Activated B cell treated with CpG ODN at 0.5 μM for 24 hours (primary cell): ENCODE measurements at regions of chr16 and their contacts with region 1.

Region 1: DNA sequence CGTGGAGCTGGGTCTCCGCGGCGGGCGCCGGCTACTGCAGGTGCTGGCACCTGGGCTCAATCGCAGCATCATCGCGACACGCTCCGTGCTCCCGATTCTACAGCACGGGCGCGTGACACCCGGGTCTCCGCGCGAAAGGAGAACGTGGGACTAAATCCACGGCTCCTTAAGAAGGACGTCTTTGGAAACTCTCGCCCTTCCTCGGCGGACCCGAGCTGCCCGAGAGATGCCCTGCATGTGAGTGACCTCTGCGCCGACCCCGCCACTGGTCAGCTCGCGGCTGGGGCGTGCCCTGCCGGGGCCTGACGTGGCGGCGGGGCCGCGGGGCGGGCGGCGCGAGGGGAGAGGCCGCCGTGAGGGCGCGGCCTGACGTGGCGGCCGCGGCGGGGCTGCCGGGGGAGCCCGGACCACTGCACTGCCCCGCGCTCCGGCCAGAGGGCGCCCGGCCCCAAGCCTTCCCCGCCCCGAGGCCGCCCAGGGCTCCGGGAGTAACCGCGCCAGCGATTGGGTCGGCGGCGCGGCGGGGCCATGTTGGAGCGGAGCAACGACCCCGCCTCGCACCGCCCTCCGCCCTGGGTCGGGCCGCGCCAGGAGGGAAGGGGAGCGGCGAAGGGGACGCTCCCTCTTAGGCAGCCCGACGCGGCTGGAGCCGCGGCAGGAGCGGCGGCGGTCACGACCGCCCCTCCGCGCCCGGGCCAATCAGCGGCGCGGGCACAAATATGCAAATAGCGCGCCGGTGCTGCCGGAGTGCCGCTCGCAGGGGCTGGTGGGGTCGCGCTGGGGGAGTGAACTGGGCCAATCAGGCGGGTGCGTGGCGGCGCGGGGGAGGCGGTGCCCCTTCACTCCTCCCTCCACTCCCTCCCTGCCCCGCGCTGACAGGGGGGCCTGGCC is 75.6 kb downstream of the CHD9 start:
- DNase-seq: peak; percentile 97
- ATAC-seq: peak; percentile 83
- H3K4me3 Mint-ChIP-seq: peak overlapping the region; percentile 87
- H3K27ac Mint-ChIP-seq: peak overlapping the region; percentile 81
- H3K4me1 Mint-ChIP-seq: peaks cover 43% of the 10 kb centered on the region
- H3K27me3 Mint-ChIP-seq: no peaks in the 10 kb centered on the region
- CTCF ChIP-seq: no peak

Region 2: DNA sequence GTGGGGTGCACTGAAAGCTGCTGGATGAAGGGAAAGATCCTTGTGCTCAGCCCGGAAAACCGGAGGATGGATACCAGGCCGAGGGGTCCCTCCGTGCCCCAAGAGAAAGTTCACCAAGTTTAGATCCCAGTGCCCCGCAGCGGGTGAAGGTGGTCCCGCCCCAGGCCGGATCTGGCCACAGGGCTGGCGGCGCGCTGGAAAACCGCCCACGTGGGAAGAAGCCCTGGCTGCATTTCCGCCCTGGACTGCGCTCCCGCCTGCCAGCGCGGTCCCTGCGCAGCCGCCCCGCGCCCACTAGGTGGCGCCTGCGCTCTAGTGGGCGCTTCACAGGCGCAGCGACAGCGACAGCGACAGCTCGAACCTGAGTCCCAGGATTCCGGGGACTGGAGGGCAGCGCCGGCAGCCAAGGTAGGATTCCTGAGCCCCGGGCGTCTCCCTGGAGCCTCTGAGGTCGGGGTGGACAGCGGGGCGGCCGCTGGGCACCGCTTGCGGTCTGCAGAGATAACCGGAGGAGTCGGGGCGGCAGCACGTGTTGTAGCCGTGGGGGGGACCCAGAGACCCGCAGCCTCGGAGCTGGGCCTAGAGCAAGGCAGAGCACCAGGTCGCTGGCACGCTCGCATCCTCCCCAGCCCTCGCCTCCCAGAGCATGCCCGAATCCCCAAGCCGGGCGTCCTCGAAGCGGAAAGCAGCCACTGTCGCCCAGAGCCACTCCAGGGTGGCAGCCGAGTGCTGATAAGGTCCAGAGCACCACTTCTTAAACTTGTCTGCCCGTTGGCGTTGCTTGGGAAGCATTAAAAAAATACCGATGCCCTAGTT is 75.5 kb before region 1 on chr16 and contains the start of gene CHD9:
- CTCF ChIA-PET with region 1: interaction called, 13 read pairs
- POLR2A ChIA-PET with region 1: interaction called, 7 read pairs
- intact Hi-C with region 1: loop called (anchors 1 kb)
- DNase-seq: peak; percentile 83
- ATAC-seq: peak; percentile 89
- H3K4me3 Mint-ChIP-seq: peak within 1 kb of the TSS; percentile 91
- H3K27ac Mint-ChIP-seq: peak within 1 kb of the TSS; percentile 85
- H3K4me1 Mint-ChIP-seq: peaks cover 46% of the 10 kb centered on the region
- H3K27me3 Mint-ChIP-seq: no peaks in the 10 kb centered on the region
- CTCF ChIP-seq: peak; percentile 97
- total RNA-seq, gene CHD9: 65.0 and 67.4 TPM in 2 replicates

Region 3: DNA sequence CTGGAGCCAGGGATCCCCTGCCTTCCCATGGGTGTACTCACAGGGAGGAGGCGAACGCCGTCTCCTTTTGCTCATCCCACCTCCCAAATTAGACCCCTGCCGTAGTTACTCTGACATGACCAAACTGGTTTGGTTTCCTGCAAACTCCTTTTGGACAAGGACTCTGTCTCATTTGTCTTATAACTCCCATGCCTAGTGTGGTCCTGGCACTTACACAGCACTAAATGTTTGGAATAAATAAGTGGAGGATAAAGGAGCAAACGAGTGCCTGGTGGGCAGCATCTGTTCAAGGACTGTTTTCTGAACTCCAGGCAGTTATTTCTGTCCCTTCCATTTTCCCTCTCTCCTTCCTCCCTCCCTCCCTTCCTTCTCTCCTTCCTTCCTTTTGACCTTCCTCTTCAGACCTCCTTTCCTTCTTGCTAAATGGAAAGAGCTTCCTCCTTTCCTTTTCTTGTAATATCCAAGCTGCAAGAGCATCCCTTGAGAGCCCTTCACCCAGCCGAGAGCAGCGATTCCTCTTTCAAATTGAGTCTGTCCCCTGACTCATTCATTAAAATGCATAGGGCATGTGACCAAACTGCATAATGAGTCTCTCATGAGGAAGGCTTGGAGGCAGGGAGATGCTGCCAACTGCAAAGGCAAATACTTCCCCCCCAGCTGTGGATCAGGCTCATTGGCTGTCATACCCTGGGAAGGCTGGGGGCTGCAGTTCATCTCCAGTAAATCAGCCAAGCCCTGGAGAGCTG is 38.8 kb before region 1 on chr16:
- CTCF ChIA-PET with region 1: no interaction called
- POLR2A ChIA-PET with region 1: interaction called, 3 read pairs
- intact Hi-C with region 1: loop called (anchors 1 kb)
- DNase-seq: peak; percentile 26
- ATAC-seq: peak; percentile 79
- H3K4me3 Mint-ChIP-seq: peak overlapping the region; percentile 79
- H3K27ac Mint-ChIP-seq: peak overlapping the region; percentile 87
- H3K4me1 Mint-ChIP-seq: peaks cover 77% of the 10 kb centered on the region
- H3K27me3 Mint-ChIP-seq: no peaks in the 10 kb centered on the region
- CTCF ChIP-seq: no peak

Region 4: GRCh38 chr16:53154513-53154912 is 24.1 kb after region 1 on chr16:
- CTCF ChIA-PET with region 1: interaction called, 12 read pairs
- POLR2A ChIA-PET with region 1: no interaction called
- intact Hi-C with region 1: loop called (anchors 2 kb)
- DNase-seq: no peak
- ATAC-seq: no peak
- H3K4me3 Mint-ChIP-seq: no peak overlapping the region
- H3K27ac Mint-ChIP-seq: no peak overlapping the region
- H3K4me1 Mint-ChIP-seq: no peaks in the 10 kb centered on the region
- H3K27me3 Mint-ChIP-seq: no peaks in the 10 kb centered on the region
- CTCF ChIP-seq: no peak

Region 5: DNA sequence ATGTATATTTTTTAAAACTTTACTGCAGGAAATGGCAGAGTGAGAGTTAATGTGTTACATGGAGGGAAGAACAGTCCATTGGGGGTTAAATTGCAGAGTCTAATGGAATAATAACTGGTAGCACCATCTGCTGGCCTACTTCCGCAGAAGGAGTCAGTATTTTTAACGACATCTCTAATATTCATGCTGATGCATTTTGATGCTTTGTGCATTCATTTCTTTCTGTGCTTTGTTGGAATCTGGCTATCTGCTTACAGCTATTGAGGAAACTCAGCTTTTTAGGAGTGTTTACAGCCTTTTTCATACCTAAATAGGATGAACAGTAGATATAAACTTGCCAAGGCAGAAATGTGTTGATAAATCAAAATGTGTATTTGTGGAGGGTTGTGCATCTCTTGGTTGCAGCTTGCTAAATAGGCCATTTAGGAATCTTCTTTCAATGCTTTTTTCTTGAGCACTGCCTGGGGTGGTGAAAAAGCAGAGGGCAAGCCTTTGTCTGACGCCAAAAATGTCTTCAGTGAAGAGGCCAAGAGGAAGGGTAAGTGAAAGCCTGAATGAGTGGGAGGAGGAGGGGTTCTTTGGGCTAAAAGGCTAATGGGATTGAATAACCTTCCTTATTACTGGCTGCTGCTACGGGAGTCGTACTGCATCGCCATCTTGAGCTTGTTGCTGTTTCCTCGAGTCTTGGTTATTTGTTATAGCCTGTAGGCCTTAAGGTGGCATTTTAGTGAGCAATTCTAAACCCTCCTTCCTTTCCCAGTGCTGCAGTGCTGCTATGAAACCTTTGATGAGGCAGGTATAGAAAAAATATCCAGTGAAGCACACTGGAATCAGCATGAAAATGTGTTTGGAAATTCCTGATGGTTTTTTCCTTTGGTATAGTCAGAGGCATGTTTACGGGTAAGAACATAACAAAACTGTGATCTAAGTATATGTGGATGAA is 77.7 kb after region 1 on chr16:
- CTCF ChIA-PET with region 1: interaction called, 5 read pairs
- POLR2A ChIA-PET with region 1: interaction called, 4 read pairs
- intact Hi-C with region 1: loop called (anchors 1 kb)
- DNase-seq: no peak
- ATAC-seq: peak; percentile 81
- H3K4me3 Mint-ChIP-seq: peak overlapping the region; percentile 88
- H3K27ac Mint-ChIP-seq: peak overlapping the region; percentile 97
- H3K4me1 Mint-ChIP-seq: peaks cover 32% of the 10 kb centered on the region
- H3K27me3 Mint-ChIP-seq: no peaks in the 10 kb centered on the region
- CTCF ChIP-seq: no peak

Region 6: DNA sequence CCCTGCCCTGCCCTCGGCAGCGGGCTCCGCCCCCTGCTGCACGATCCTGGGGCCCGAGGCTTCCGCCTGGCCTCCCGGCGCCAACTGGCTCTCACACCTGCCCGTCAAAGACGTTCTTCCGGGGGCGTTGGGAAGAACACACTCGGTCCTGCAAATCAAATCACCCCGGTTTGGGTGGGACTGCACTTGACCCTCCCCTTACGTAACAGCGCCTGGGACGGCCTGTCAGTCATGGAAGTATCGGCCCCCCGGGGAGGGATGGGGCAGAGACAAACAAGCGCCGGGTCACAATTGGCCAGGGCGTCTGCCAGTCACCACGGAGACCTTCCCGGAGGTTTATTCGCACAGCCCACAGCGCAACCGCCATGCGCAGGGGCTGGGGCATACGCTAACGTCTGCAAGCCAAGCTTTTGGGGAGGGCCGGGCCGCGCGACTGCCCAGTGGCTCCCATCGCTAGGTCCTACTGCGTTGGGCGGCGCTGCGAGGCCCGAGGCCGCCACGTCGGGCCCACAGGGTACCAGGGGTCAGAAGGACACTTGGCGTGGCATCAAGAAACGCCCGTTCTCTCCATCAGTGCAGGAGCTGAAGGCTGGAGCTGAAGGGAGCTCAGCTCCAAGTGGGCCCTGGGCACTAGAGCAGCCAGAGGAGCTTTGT is 373.0 kb after region 1 on chr16:
- CTCF ChIA-PET with region 1: no interaction called
- POLR2A ChIA-PET with region 1: no interaction called
- intact Hi-C with region 1: loop called (anchors 1 kb)
- DNase-seq: peak; percentile 97
- ATAC-seq: peak; percentile 92
- H3K4me3 Mint-ChIP-seq: peak overlapping the region; percentile 88
- H3K27ac Mint-ChIP-seq: peak overlapping the region; percentile 90
- H3K4me1 Mint-ChIP-seq: peaks cover 30% of the 10 kb centered on the region
- H3K27me3 Mint-ChIP-seq: no peaks in the 10 kb centered on the region
- CTCF ChIP-seq: no peak